ENCODE measurements at regions of chr2 and their contacts with region 1.

Region 1: GRCh38 chr2:54594048-54594447 is 129.4 kb upstream of the EML6 start:
- DNase-seq: no peak
- ATAC-seq: no peak
- H3K4me3 ChIP-seq: no peak overlapping the region
- H3K27ac ChIP-seq: no peak overlapping the region
- H3K4me1 ChIP-seq: peaks cover 67% of the 10 kb centered on the region
- CTCF ChIP-seq: no peak
- EP300 ChIP-seq: no peak
- POLR2A ChIP-seq: no peak
- RAD21 ChIP-seq: no peak

Region 2: GRCh38 chr2:54606393-54606969 is 12.4 kb after region 1 on chr2:
- CTCF ChIA-PET with region 1: interaction called, 11 read pairs
- POLR2A ChIA-PET with region 1: no interaction called
- DNase-seq: no peak
- ATAC-seq: no peak
- H3K4me3 ChIP-seq: no peak overlapping the region
- H3K27ac ChIP-seq: peak overlapping the region in 1 of 2 experiments; percentile 52; a peak in 1 of 6 replicates
- H3K4me1 ChIP-seq: peaks cover 90% of the 10 kb centered on the region
- CTCF ChIP-seq: no peak
- EP300 ChIP-seq: no peak
- POLR2A ChIP-seq: no peak
- RAD21 ChIP-seq: no peak

Measured in A549 (cell line).